ENCODE measurements at regions of chr6 and their contacts with region 1.

Region 1: GRCh38 chr6:116217069-116217468 is 36.8 kb downstream of the TSPYL4 start:
- DNase-seq: no peak
- H3K4me3 ChIP-seq: no peak overlapping the region
- CTCF ChIP-seq: peak; percentile 30

Region 2: GRCh38 chr6:116094041-116094440 is 123.0 kb before region 1 on chr6:
- CTCF ChIA-PET with region 1: no interaction called
- POLR2A ChIA-PET with region 1: no interaction called
- DNase-seq: no peak
- H3K4me3 ChIP-seq: no peak overlapping the region
- CTCF ChIP-seq: no peak

Region 3: GRCh38 chr6:116196841-116197240 is 20.2 kb before region 1 on chr6:
- CTCF ChIA-PET with region 1: interaction called, 10 read pairs
- POLR2A ChIA-PET with region 1: no interaction called
- DNase-seq: no peak
- H3K4me3 ChIP-seq: no peak overlapping the region
- CTCF ChIP-seq: no peak

Region 4: GRCh38 chr6:116229287-116229913 is 12.3 kb after region 1 on chr6:
- CTCF ChIA-PET with region 1: interaction called, 46 read pairs
- POLR2A ChIA-PET with region 1: no interaction called
- DNase-seq: peak; percentile 74
- H3K4me3 ChIP-seq: peak overlapping the region; percentile 52
- CTCF ChIP-seq: no peak

Region 5: GRCh38 chr6:116279260-116280063 is 62.4 kb after region 1 on chr6 and contains the start of gene TSPYL1:
- CTCF ChIA-PET with region 1: interaction called, 143 read pairs
- POLR2A ChIA-PET with region 1: no interaction called
- DNase-seq: peak; percentile 59
- H3K4me3 ChIP-seq: peak within 1 kb of the TSS; percentile 90
- CTCF ChIP-seq: no peak

Region 6: DNA sequence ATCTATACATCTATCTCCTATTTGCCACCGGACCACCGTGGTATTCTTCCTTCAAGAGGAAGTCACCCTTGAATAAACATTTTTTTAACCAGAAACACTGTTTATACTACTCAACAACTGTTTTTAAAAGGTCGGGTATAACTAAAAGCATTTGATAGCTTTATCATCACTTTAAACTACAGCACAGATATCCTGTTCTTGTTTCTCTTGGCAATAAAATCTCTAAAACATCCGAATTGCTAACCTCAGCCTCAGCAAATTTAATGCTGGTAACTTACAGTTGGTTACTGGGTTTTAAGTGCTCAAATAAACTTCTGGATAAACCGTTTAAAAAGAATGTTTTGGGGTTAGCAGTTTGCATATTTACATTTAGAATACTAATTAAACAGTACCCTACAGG is 431.1 kb after region 1 on chr6:
- CTCF ChIA-PET with region 1: interaction called, 12 read pairs
- POLR2A ChIA-PET with region 1: no interaction called
- DNase-seq: peak; percentile 26
- H3K4me3 ChIP-seq: no peak overlapping the region
- CTCF ChIP-seq: no peak